Activated CD8-positive, alpha-beta T cell treated with anti-CD3 and anti-CD28 coated beads for 36 hours (primary cell): ENCODE measurements at regions of chr6 and their contacts with region 1.

Region 1: GRCh38 chr6:31079656-31080261 is 32.6 kb downstream of the C6orf15 start:
- DNase-seq: peak; percentile 84
- ATAC-seq: peak; percentile 91
- H3K4me3 Mint-ChIP-seq: peak overlapping the region; percentile 58
- H3K27ac Mint-ChIP-seq: no peak overlapping the region
- H3K4me1 Mint-ChIP-seq: peaks cover 8% of the 10 kb centered on the region
- H3K27me3 Mint-ChIP-seq: no peaks in the 10 kb centered on the region
- CTCF ChIP-seq: peak; percentile 91

Region 2: DNA sequence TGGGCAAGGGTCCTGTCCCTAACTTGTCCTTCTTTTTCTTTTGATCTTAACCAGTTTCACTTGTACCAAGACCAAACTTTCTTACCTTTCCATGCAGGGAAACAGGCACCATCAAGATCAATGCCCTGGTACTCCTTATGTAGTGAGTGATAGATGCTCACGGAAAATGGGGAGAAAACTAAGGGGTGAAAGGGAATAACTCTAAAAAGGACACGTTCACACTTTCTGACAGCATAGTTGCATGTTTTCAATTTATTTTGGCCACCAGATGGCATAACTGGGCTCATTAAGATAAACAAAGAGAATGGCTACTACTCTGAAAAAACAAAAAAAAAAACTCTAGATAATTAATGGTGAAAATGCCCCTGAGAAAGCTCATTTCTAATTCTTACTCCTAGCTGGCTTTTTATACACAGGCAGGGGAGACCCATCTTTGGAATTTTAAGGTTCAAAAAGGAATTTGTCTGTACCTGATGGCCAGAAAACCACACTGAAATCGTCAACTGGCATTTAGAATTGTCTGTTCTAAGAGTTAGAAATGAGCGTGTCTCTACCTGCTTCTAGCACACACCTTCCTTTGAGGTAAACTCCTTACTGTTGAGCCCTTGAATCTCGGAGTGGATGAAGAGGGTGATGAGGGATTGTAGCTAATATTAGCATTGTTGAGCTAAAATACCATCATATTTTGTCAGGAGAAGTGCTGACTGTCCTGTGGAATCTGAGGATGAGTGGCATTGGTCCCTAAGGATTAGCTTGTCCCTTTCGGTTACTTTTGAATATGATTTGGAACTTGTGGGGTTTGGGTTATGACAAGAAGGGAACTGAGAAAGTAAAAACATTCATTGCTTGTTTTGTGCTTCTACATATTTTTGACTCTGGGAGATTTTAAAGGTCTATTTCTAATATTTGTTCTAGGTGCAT is 257.6 kb before region 1 on chr6:
- CTCF ChIA-PET with region 1: interaction called, 23 read pairs
- POLR2A ChIA-PET with region 1: no interaction called
- intact Hi-C with region 1: loop called (anchors 5 kb)
- DNase-seq: no peak
- ATAC-seq: no peak
- H3K4me3 Mint-ChIP-seq: no peak overlapping the region
- H3K27ac Mint-ChIP-seq: peak overlapping the region; percentile 82
- H3K4me1 Mint-ChIP-seq: peaks cover 79% of the 10 kb centered on the region
- H3K27me3 Mint-ChIP-seq: no peaks in the 10 kb centered on the region
- CTCF ChIP-seq: peak; percentile 74

Region 3: DNA sequence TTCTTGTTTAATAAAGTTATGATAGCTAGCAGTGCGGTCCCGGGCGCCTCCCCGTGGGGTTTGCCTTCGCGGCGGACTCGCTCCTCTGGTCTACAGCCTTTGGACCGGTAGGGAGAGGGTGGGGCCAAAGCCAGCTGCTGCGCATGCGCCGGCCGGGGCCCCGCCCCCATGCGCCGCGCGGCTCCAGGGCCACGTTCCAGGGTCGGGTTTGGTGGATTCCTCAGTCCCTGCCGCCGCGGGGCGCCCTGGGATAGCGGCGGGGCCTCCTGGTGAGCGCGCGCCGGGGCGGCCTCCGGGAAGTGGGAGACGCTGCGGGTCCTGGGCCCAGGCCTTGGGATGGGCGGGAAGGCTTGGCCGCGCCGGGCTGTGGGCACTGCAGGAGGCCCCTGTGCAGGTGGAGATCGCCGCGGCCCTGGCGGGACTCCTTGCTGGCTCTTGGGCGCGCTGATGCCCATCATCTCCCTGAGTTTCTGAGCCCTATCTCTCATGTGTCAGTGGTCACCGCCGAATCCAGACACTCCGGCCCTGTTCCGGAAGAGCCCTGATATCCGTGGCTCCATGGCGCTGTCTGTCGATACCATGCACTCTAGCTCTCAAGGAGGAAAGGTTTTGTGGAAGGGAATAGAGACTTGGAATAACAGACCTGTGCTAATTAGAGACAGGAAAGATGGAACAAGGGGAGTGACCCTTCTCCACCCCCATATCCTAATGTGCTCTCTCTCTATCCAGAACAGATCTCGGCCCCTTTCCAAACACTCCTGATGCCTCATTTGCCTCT is 165.5 kb before region 1 on chr6 and contains the start of gene VARS2:
- CTCF ChIA-PET with region 1: interaction called, 116 read pairs
- POLR2A ChIA-PET with region 1: interaction called, 3 read pairs
- intact Hi-C with region 1: no loop called
- DNase-seq: peak; percentile 89
- ATAC-seq: peak; percentile 96
- H3K4me3 Mint-ChIP-seq: peak within 1 kb of the TSS; percentile 80
- H3K27ac Mint-ChIP-seq: peak within 1 kb of the TSS; percentile 88
- H3K4me1 Mint-ChIP-seq: peaks cover 29% of the 10 kb centered on the region
- H3K27me3 Mint-ChIP-seq: no peaks in the 10 kb centered on the region
- CTCF ChIP-seq: no peak
- total RNA-seq, gene VARS2: 83.0 to 84.0 TPM

Region 4: GRCh38 chr6:30955367-30956042 is 124.3 kb before region 1 on chr6:
- CTCF ChIA-PET with region 1: interaction called, 14 read pairs
- POLR2A ChIA-PET with region 1: interaction called, 5 read pairs
- intact Hi-C with region 1: no loop called
- DNase-seq: peak; percentile 88
- ATAC-seq: peak; percentile 90
- H3K4me3 Mint-ChIP-seq: peak overlapping the region; percentile 76
- H3K27ac Mint-ChIP-seq: peak overlapping the region; percentile 58
- H3K4me1 Mint-ChIP-seq: peaks cover 22% of the 10 kb centered on the region
- H3K27me3 Mint-ChIP-seq: peaks cover 33% of the 10 kb centered on the region
- CTCF ChIP-seq: no peak

Region 5: DNA sequence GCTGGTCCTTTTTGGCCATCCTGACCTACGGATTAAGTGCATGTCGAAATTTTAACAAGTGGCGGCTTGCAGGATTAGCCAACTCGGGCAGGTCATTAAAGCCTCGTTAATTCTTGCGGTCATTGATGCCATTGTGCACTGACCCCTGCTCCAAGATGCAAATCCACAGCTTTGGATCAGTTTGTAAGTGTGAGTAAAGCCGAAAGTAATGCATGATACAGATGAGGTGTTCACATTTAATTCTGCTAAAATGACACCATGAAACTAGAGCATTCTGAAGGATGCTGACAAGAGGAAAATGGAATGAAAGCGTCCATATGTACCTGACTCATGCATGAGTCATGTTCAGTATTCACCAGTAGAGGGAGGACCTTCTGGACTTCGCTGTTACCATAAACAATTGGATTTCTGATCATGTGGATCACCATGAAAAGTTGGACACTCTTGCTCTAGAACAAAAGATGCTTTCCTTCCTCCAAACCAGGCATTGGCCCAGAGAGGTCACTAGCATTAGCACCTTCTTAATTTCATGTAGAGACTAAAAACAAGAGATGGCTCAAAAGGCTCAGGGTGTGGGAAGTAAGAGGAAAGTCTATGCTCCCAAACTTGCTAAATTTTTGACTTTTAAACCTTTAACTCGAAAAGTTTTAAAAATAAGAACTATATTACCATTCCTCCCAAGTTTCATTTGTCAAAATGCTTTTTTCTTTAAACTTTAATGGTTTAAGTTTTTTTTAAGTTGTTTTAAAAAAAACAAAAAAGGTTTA is 21.4 kb before region 1 on chr6:
- CTCF ChIA-PET with region 1: interaction called, 13 read pairs
- POLR2A ChIA-PET with region 1: no interaction called
- intact Hi-C with region 1: no loop called
- DNase-seq: no peak
- ATAC-seq: peak; percentile 67
- H3K4me3 Mint-ChIP-seq: no peak overlapping the region
- H3K27ac Mint-ChIP-seq: no peak overlapping the region
- H3K4me1 Mint-ChIP-seq: peaks cover 5% of the 10 kb centered on the region
- H3K27me3 Mint-ChIP-seq: peaks cover 8% of the 10 kb centered on the region
- CTCF ChIP-seq: peak; percentile 30

Region 6: DNA sequence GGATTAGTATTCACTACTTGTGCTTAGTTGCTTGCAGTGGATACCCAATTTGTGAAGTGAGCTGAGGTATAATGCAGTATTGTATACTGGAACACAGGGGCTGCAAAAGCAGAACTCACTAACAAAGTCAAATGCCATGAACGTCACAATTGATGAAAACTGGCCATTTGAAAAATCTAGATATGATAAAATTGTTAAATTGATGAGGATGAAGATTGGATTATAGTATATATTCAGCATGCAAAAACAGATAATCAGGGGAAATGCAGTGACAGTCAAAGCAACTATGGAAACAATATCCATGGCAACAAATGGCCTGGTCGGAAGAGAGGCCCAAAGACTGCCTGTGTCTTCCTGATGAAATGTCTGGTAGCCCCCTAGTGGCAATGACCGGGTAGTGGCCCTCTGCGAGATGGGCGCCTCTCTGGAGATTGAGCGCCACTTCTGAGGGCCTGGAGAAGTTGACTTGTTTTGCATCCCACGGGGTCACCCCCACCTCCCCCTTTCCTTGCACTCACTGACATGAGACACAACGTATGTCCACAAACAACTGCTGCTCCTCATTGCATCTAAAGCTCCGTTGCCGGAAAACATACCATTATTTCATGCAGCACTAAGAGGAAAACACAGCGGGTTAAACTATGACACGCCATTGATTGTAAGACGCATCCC is 11.0 kb before region 1 on chr6:
- CTCF ChIA-PET with region 1: interaction called, 46 read pairs
- POLR2A ChIA-PET with region 1: interaction called, 3 read pairs
- intact Hi-C with region 1: no loop called
- DNase-seq: peak; percentile 75
- ATAC-seq: peak; percentile 96
- H3K4me3 Mint-ChIP-seq: no peak overlapping the region
- H3K27ac Mint-ChIP-seq: no peak overlapping the region
- H3K4me1 Mint-ChIP-seq: peaks cover 1% of the 10 kb centered on the region
- H3K27me3 Mint-ChIP-seq: no peaks in the 10 kb centered on the region
- CTCF ChIP-seq: peak; percentile 89

Region 7: DNA sequence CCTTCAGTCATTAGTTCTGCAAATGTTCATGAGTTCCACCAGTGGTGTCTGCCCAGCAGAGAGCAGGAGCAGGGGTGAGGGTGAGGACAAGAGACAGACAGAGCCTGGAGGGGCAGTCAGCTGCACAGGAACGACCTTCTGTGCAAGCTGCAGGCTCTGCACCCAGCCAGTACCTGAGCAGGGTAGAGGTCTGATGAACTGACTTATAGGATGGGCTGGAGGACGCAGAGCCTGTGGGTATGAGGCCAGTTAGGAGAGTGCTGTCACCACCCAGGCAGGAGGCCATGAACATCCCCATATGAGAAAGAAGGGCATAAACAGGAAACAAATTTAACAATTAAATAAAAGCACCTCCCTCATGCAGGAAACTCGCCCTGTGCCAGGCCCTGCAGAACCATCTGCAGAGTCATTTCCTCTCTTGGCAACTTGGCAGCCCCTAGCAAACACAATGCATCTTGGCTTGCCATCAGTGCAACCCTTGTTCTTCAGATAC is 14.7 kb after region 1 on chr6:
- CTCF ChIA-PET with region 1: interaction called, 55 read pairs
- POLR2A ChIA-PET with region 1: interaction called, 5 read pairs
- intact Hi-C with region 1: no loop called
- DNase-seq: peak; percentile 45
- ATAC-seq: peak; percentile 83
- H3K4me3 Mint-ChIP-seq: no peak overlapping the region
- H3K27ac Mint-ChIP-seq: peak overlapping the region; percentile 88
- H3K4me1 Mint-ChIP-seq: peaks cover 36% of the 10 kb centered on the region
- H3K27me3 Mint-ChIP-seq: no peaks in the 10 kb centered on the region
- CTCF ChIP-seq: no peak

Region 8: DNA sequence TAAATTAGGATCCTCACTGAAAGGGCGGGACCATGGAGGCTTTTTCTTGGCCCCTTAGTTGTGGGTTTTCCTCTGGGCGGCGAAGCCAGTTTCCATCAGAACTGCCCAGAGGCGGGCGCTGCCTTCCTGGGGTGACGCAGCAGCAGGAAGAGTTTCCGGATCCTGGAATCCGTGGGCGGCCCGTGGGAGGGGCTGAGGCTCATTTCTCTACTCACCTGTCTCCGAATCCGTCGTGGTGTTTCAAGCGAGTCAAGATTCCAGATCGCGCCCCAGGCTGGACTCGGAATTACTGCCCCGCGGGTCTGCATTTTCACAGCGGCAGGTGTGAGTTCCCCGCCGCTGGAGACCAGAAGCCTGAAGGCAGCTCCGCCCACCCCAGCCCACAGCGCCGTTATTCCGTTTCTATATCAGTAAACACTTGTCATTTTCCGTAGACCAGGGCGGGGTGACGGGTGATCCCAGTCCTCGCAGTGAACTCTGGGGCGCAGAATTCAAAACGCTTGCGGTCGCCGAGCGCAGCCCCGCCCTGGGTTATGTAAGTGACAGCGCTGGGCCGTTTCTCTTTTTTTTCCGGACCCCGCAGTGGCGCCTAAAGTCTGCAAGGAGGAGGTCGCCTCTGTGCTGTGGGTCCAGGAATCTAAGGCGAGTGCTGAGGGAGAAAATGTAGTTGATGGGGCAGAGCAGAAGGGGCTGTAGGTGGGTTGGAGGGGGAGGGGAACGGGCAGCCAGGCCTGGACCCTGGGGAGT is 118.0 kb after region 1 on chr6:
- CTCF ChIA-PET with region 1: no interaction called
- POLR2A ChIA-PET with region 1: no interaction called
- intact Hi-C with region 1: no loop called
- DNase-seq: peak; percentile 99
- ATAC-seq: peak; percentile 81
- H3K4me3 Mint-ChIP-seq: peak overlapping the region; percentile 80
- H3K27ac Mint-ChIP-seq: peak overlapping the region; percentile 96
- H3K4me1 Mint-ChIP-seq: peaks cover 49% of the 10 kb centered on the region
- H3K27me3 Mint-ChIP-seq: no peaks in the 10 kb centered on the region
- CTCF ChIP-seq: no peak